Ovary (tissue), 10 donors: ENCODE measurements at regions of chr7 and their contacts with region 1.

Region 1: DNA sequence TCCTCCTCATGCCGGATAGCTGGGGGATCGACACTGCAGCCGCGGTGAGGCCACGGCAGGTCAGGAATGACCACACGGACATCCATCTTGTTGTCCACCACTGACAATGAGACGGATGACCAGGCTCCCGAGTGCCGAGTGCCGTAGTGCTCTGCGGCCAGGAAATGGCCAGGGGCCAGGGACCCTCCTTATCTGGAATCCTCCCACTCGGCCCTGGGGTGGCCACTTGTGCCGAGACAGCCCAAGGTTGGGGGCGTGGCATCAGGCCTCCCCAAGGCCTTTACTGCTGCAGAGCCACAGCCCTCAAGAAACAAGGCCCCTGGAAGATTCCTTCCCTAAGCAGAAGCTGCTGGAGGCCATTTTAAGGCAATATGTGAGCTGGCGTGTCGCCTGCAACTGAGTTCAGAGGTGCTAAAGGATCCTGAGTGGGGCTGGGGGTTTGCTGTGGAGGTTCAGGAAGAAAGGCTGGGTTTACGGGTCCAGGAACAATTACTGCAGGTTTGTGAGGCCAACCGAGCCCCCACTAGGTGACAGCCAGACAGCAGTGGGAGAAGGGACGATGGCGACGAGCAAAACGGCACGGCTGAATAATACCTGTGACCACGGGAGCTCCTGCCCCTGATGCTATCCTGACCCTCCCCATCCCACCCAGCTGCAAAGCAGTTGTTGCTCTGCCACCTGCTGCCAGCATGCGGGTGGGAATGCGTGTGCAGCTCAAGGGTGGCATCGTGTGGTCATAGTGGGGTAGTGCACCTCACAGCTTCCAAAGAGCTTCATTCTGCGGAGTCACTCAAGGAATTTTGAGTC is 31.6 kb upstream of the LEP start:
- DNase-seq: peak; percentile 44 to 80 (median 59)
- H3K4me3 ChIP-seq: no peak overlapping the region
- H3K27ac ChIP-seq: no peak overlapping the region
- H3K4me1 ChIP-seq: no peaks in the 10 kb centered on the region
- H3K27me3 ChIP-seq: no peaks in the 10 kb centered on the region
- CTCF ChIP-seq: peak; percentile 84 to 95 (median 90)
- EP300 ChIP-seq: no peak
- POLR2A ChIP-seq: no peak

Region 2: DNA sequence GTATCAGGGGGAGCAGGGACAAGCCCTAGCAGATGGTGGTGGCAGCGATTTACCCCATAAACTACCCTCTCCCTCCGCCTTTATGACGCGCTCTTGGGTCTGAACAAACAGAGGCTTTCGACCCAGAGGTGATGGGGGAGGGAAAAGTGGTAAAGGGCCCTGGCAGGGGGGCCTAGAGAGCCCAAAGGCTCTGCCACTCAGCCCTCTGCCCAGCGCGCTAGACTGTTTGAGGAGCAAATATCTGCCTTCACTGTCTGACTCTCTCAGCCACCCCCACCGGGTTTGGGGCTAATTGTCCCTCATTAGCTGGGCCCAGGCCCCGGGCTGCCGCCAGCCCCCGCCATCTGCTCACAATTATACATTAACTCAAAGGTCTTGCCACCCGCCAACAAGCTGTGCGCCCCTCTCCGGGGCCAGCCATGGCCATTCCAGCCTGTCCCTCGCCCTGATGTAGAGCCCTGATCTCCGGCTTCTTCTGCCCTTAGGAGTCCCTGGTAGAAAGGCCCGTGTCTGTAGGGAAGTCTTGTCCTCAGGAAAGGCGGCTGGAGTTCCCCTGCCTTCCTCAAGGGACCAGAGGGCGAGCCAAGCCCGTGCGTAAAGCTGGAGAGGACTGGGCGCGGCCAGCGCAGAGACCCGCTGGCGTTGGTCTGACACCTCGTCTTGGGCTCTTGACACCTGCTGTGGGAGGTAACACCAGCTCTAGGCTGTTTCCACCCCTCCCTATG is 589.6 kb before region 1 on chr7:
- intact Hi-C with region 1: loop called in 1 of 4 experiments (anchors 10 kb)
- DNase-seq: no peak
- H3K4me3 ChIP-seq: no peak overlapping the region
- H3K27ac ChIP-seq: no peak overlapping the region
- H3K4me1 ChIP-seq: no peaks in the 10 kb centered on the region
- H3K27me3 ChIP-seq: no peaks in the 10 kb centered on the region
- CTCF ChIP-seq: no peak
- EP300 ChIP-seq: no peak
- POLR2A ChIP-seq: no peak

Region 3: GRCh38 chr7:127708788-127709187 is 500.6 kb before region 1 on chr7:
- intact Hi-C with region 1: loop called (anchors 2 to 10 kb)
- DNase-seq: peak; percentile 43 to 83 (median 65)
- H3K4me3 ChIP-seq: no peak overlapping the region
- H3K27ac ChIP-seq: no peak overlapping the region
- H3K4me1 ChIP-seq: no peaks in the 10 kb centered on the region
- H3K27me3 ChIP-seq: no peaks in the 10 kb centered on the region
- CTCF ChIP-seq: peak; percentile 52 to 72 (median 60)
- EP300 ChIP-seq: no peak
- POLR2A ChIP-seq: no peak

Region 4: DNA sequence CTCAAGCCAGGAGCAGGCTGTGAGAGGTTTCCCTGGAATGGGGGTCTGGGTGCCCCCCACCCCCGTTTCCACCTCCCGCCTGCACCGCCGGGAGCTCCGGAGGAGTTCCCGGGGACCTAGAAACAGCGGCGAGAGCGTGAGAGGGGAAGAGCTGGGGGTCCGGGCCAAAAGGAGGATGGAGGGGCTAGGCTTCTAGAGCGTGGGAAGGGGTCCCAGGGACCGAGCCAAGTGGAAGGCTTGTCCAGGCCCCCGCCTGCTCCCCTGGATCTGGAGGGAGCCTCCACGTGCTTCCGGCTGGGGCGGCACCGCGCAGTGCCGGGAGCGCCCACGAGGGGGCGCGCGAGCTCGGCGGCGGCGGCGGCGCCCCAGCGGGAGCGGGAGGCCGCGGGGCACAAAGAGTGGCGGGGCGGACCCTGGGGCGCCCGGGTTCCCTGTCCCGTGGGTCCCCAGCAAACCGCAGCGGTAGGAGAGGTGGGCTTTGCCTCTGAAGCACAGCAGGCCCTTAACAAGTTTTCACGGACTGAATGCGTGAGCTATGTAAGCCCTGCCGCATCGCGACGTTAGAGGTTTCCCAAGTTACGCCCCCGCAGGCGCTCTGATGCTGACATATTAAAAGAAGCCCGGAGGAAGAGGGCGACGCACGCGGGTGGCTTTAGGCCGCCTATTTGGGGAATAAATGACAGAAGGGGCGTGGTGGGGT is 73.8 kb before region 1 on chr7:
- intact Hi-C with region 1: loop called in 1 of 4 experiments (anchors 5 kb)
- DNase-seq: peak; percentile 22 to 72 (median 46)
- H3K4me3 ChIP-seq: peak overlapping the region; percentile 42
- H3K27ac ChIP-seq: no peak overlapping the region
- H3K4me1 ChIP-seq: peaks cover 8% of the 10 kb centered on the region
- H3K27me3 ChIP-seq: no peaks in the 10 kb centered on the region
- CTCF ChIP-seq: peak; percentile 63 to 83 (median 80)
- EP300 ChIP-seq: no peak
- POLR2A ChIP-seq: no peak

Region 5: DNA sequence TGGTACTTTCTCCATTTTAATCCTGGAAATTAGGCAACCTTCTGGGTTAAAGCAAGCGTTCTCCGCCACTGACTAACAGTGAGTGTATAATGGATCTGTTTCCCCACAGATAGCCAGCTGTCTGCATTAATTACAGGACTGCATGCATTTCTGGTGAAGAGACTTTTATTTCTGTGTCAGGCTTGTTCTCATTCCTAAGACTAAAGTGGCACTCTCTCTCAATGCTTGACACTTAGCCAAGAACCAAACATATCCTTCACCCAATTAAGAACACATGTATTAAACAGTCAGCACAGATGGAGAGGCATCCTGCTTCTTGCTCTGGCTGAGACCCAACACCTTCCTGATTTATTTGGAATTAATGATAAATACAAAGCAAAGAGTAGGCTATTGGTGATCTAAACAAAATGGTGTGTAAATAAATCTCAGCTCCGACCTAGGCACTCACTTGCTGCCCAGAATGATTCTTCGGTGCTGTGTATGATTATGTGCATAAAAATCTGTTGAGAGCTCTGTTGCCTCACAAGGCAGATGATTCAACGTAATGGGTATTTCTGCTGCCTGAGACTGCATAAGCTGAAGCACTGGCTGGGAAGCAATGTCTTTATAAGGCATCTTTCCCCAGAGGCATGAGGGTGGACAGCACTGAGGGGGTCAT is 546.5 kb after region 1 on chr7:
- intact Hi-C with region 1: no loop called
- DNase-seq: no peak
- H3K4me3 ChIP-seq: no peak overlapping the region
- H3K27ac ChIP-seq: no peak overlapping the region
- H3K4me1 ChIP-seq: no peaks in the 10 kb centered on the region
- H3K27me3 ChIP-seq: no peaks in the 10 kb centered on the region
- CTCF ChIP-seq: no peak
- EP300 ChIP-seq: no peak
- POLR2A ChIP-seq: no peak